AG04449 (cell line): ENCODE measurements at regions of chr10 and their contacts with region 1.

Region 1: DNA sequence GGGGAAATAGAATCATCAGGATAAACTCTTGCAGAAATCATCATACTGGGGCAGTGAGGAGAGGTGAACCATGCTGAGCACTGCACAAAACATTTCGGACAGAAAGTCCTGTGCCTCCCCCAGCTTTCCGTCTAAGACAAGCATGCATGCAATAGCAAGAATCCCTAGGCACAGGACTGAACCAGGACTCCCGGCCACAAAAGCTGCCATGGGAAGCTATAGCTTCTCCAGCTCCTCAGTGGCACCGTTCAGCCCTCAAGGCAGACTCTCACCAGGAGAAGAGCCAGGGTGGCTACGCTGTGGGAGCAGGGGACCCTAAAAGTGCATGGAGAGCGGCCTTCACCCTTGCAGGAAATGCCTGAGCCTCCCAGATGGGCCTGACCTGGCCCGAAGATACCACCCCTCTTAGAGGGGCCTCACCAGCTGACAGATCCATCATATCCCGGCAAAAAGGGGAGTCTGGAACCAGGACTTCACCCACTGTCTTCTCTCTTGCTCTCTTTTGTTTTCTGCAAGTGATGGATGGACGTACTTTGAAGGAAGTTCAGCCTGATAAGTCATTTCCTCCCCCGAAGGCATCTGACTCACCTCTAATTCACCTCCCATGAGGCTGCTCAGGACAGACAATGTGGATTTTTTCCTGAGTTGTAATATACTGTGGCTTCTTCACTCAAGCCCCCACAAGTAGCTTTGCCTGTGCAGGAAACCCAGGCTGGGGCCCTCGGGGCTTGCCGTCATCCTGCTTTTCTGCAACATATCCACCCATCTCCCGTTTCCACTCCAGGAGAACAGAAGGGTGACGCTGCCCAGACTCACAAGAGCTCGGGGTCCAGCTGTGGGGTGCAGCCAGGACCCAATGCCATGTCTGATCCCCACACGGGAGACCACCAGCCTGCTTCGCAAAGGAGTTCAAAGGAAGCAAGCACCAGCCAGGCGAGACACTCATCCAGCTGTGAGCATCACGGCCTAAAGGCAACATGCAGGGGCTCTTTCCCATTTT is 70.5 kb downstream of the ASB13 start:
- DNase-seq: peak; percentile 73
- H3K4me3 ChIP-seq: peak overlapping the region; percentile 49
- CTCF ChIP-seq: no peak

Region 2: GRCh38 chr10:5555021-5555510 is 40.8 kb before region 1 on chr10:
- CTCF ChIA-PET with region 1: no interaction called
- POLR2A ChIA-PET with region 1: no interaction called
- DNase-seq: no peak
- H3K4me3 ChIP-seq: no peak overlapping the region
- CTCF ChIP-seq: no peak

Region 3: GRCh38 chr10:5583525-5584175 is 12.2 kb before region 1 on chr10:
- CTCF ChIA-PET with region 1: interaction called, 21 read pairs
- POLR2A ChIA-PET with region 1: interaction called, 21 read pairs
- DNase-seq: no peak
- H3K4me3 ChIP-seq: no peak overlapping the region
- CTCF ChIP-seq: no peak

Region 4: DNA sequence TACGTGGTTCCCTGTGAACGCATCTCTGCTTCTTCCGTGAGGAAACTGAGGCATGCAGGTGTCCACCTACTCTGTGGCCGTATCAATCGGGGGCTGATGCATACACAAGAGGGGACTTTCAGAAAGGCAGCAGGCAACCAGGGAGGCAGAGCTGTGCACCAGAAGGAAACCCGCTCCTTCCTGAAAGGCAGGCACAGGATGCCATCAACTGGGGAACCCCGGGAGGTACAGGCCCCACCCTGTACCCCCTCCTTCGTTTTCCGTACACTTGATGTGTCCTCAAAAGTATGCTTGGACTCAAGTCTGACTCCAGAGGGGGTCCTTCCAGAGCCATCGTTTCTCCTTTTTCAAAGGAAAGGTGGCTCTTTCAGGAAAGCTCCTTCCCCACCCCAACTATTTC is 11.0 kb after region 1 on chr10:
- CTCF ChIA-PET with region 1: interaction called, 17 read pairs
- POLR2A ChIA-PET with region 1: no interaction called
- DNase-seq: no peak
- H3K4me3 ChIP-seq: no peak overlapping the region
- CTCF ChIP-seq: no peak

Region 5: DNA sequence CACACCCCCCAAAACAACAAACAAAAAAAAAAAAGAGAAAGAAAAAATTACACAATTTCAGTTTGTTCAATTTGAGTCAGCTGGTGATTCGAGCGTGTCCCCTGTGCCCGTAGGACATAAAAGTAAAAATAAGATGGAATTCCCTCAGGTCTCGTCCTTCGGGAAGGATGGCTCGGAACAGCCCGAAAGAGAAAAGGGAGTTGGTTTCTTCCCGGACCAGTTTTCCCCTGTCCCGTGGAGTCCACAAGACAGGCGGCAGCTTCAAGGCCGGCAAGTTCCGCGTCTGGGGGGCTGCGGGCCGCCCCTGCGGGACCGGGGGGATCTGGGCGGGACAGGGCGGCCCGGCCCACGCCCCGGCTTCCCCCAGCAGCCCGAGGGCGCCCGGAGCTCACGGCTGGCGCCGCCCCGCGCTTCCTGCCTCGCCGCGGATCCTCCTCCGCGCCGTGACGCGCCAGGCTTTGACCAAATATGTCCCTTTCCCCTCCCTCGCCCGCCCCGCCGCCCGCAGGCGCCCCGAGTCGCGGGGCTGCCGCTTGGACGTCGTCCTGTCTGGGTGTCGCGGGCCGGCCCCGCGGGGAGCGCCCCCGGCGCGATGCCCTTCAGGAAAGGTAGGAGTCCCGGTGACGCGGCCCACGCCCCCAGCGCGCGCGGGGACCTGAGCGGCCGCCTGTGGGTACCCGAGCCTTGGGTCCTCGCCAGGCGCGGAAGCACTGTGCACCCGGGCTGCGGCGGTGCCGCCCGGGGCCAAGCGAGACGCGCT is 548.7 kb after region 1 on chr10:
- CTCF ChIA-PET with region 1: no interaction called
- POLR2A ChIA-PET with region 1: no interaction called
- DNase-seq: no peak
- H3K4me3 ChIP-seq: peak overlapping the region; percentile 68
- CTCF ChIP-seq: no peak